ENCODE measurements at regions of chr12 and their contacts with region 1.

Region 1: DNA sequence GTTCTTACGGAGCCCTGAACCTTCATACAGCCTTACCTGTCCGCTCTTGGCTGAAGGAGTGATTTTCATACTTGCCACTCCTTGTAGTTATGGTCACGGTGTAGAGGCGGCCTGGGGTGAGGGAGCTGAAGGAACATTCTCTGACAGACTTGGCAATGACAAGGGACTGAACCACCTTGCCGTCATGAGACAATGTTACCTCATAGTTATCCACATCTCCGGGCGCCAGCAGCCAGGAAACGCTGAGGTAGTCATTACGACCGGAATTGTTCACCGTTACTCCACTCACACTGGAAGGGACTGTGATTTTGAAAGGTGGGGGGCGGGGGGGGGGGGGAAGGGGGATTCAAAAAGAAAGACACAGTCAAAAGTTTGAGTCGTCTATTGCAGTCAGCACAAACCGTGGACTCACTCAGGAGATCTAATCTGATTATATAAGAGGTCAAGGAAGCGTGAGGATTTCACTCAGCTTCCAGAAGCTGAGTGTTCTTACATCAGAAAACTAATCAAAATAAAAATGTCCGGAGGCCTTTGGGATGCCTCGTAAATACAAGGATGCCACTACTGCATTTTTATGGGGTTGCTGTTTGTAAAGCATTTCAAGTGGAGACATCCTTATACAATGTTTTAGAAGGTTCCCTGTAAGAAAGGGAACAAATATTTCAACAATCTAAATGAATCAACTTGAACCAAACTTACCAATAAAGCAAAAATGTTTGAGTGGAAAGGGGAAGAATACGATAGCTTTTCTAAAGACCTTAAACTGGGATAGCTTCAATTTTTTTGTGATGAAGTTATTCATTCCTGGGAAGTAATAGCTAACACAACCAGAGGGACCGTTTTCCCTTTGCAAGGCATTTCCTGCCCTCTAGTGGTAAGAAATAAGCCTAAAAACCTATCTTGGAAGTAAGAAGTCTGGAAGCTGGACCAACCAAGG is 60.6 kb downstream of the PTPRB start:
- DNase-seq: peak in 4 of 5 donors; percentile 38 to 47 (median 42)
- H3K4me3 ChIP-seq: no peak overlapping the region
- H3K4me3 Mint-ChIP-seq: no peak overlapping the region
- H3K27ac ChIP-seq: no peak overlapping the region
- H3K27ac Mint-ChIP-seq: no peak overlapping the region
- H3K4me1 ChIP-seq: no peaks in the 10 kb centered on the region
- H3K4me1 Mint-ChIP-seq: no peaks in the 10 kb centered on the region
- H3K27me3 ChIP-seq: no peaks in the 10 kb centered on the region
- H3K27me3 Mint-ChIP-seq: peaks cover 7 to 18% of the 10 kb centered on the region in 2 donors

Region 2: DNA sequence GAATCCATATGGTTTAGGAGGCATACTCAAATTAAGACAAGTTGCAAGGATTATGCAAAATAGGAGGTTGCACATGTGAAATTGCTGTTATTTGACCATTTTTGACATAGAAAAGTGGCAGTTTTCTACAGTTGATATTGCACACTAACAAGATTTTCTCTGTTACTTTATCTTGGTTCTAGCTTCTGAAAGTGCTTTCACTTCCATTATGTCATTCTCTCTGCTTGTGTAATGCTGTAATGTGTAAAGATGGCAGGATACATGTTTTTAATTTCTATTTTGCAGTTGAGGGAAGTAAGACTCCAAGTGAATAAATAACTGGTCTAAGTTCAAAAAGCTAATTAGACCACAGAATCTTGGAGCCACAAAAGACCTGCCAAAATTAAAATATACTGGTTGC is 691.0 kb before region 1 on chr12:
- CTCF ChIA-PET with region 1: interaction called, 53 read pairs
- POLR2A ChIA-PET with region 1: no interaction called
- intact Hi-C with region 1: no loop called
- DNase-seq: no peak
- H3K4me3 ChIP-seq: no peak overlapping the region
- H3K4me3 Mint-ChIP-seq: no peak overlapping the region
- H3K27ac ChIP-seq: no peak overlapping the region
- H3K27ac Mint-ChIP-seq: no peak overlapping the region
- H3K4me1 ChIP-seq: no peaks in the 10 kb centered on the region
- H3K4me1 Mint-ChIP-seq: no peaks in the 10 kb centered on the region
- H3K27me3 ChIP-seq: no peaks in the 10 kb centered on the region
- H3K27me3 Mint-ChIP-seq: peaks cover 2 to 4% of the 10 kb centered on the region in 2 donors

Region 3: DNA sequence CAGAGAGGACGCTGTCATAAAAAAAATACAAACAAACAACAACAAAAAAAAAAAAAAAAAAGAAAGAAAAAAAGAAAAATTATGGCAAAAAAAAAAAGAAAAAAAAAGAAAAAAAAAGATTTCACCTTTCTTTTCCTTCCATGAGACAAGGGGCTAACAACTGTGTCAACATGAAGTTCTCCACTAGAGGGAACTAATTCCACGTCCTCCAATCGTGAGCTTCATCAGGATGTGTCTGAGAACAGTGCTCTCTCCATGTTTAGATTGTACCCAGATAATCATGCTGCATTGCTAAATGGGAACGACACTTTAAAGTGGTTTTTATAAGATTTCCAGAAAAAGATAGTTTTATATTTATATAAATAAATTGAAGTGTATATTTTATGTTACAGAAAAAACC is 156.8 kb after region 1 on chr12:
- CTCF ChIA-PET with region 1: no interaction called
- POLR2A ChIA-PET with region 1: no interaction called
- intact Hi-C with region 1: loop called (anchors 1 kb)
- DNase-seq: peak in 2 of 5 donors; percentile 11 to 30
- H3K4me3 ChIP-seq: no peak overlapping the region
- H3K4me3 Mint-ChIP-seq: no peak overlapping the region
- H3K27ac ChIP-seq: no peak overlapping the region
- H3K27ac Mint-ChIP-seq: no peak overlapping the region
- H3K4me1 ChIP-seq: no peaks in the 10 kb centered on the region
- H3K4me1 Mint-ChIP-seq: peaks cover 0 to 1% (median 0%) of the 10 kb centered on the region in 4 donors
- H3K27me3 ChIP-seq: no peaks in the 10 kb centered on the region
- H3K27me3 Mint-ChIP-seq: peaks cover 4 to 5% of the 10 kb centered on the region in 2 donors